MCF 10A (cell line): ENCODE measurements at regions of chr14 and their contacts with region 1.

Region 1: GRCh38 chr14:91127401-91127854 is 13.6 kb downstream of the DGLUCY start:
- DNase-seq: peak; percentile 95
- H3K4me3 Mint-ChIP-seq: no peak overlapping the region
- H3K27ac Mint-ChIP-seq: no peak overlapping the region
- H3K4me1 Mint-ChIP-seq: peaks cover 11% of the 10 kb centered on the region
- H3K27me3 Mint-ChIP-seq: no peaks in the 10 kb centered on the region
- CTCF ChIP-seq: no peak

Region 2: DNA sequence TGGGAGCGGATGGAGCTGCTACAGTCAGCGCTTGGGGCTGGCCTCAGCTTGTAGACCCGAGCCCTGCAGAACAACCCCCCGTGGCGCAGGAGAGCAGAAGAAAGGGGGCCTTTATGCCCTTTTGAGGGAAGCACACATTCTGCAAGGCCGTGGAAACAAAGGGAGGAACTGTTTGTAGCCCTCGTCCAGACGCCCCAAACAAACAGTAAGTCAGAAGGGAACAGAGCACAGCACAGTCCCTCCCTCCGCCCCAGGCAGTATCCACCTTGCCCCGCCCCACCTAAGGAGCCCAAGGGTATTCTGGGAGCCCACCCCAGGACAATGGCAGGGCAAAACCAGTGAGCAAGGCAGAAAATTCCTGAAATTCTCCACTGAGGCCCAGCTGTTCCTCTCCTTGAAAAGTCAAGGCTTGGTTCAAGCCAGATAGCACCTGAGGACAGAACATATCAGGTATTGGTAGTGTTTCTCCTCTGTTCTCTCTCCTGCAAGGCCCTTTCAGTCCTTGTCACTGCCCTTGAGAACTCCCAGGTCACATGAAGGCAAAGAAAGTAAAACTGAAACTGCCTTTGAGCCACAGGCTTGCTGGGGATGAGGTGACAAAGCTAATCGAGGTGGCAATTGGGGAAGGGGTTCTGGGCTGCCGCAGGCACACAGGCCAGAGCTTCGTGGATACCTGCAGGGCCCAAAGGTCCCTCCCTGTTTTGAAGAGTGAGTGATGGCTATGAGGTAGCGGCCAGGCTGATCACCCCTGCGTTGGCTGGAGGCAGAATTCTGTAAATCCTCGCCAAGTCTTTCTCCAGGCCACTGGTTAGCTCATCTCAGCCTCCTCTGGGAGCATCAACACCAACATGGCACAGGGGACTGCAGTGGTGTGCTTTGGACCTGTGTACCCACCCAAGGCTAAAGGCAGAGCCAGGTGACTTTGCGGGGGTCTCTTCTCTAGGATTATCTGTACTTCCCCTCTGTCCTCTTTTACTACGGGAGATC is 13.1 kb before region 1 on chr14:
- CTCF ChIA-PET with region 1: no interaction called
- POLR2A ChIA-PET with region 1: interaction called, 29 read pairs
- intact Hi-C with region 1: no loop called
- DNase-seq: peak; percentile 39
- H3K4me3 Mint-ChIP-seq: peak overlapping the region; percentile 81
- H3K27ac Mint-ChIP-seq: peak overlapping the region; percentile 74
- H3K4me1 Mint-ChIP-seq: peaks cover 26% of the 10 kb centered on the region
- H3K27me3 Mint-ChIP-seq: no peaks in the 10 kb centered on the region
- CTCF ChIP-seq: no peak